Caco-2 (cell line): ENCODE measurements at regions of chr11 and their contacts with region 1.

Region 1: GRCh38 chr11:4636962-4637661 is at the start of gene OR51D1:
- DNase-seq: peak; percentile 63 to 78
- H3K4me3 ChIP-seq: no peak within 1 kb of the TSS
- H3K4me3 Mint-ChIP-seq: no peak within 1 kb of the TSS
- H3K27ac Mint-ChIP-seq: no peak within 1 kb of the TSS
- H3K4me1 ChIP-seq: peaks cover 11% of the 10 kb centered on the region
- H3K4me1 Mint-ChIP-seq: peaks cover 13% of the 10 kb centered on the region
- H3K27me3 ChIP-seq: peaks cover 1% of the 10 kb centered on the region; the same call in 1 of the 2 replicates
- H3K27me3 Mint-ChIP-seq: no peaks in the 10 kb centered on the region
- CTCF ChIP-seq: peak; percentile 89 to 94
- total RNA-seq, gene OR51D1: not detected in 2 replicates

Region 2: DNA sequence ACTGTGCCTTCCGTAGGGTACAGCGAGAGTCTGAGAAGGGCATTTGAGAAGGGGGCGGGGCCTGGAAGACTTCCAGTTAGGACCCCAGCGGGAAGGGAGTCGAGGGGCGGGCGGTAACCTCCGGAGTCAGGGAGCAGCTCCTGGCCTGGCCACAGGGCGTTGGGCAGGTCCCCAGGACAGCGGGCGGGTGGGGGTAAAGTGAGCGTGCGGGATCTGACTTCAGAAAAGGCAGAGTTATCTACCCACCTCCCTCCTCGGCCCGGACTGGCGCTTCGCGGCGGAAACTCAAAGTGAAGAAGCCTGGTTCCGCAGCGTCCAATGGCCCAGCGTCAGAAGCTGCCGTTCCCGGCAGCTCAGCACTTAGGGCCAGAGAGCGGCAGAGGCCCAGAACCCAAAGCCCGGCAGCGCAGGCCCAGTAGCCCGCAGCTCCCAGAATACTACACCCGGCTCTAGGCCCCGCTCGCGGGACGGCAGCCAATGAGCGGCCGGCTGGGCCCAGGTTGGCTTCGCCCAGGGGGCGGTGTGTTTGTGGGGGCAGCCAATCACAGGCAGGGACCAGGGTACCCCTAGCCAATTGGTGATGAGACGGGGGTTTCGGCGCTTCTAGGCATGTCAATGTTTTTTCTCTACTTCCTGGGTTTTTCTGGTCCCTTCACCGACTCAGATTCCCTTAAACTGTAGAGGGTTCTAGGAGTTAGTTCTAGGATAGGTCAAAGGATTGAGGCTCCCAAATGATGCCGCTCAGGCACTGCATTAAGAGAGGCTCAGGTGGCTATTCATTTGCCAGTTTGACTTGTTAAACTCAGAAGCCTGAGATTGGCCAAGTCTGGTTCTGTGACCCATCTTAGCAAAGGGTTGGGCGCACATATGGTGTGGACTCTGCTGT is 29.1 kb before region 1 on chr11 and contains the start of gene TRIM68:
- CTCF ChIA-PET with region 1: interaction called, 12 read pairs
- POLR2A ChIA-PET with region 1: no interaction called
- intact Hi-C with region 1: no loop called
- DNase-seq: peak; percentile 97 to 98
- H3K4me3 ChIP-seq: peak within 1 kb of the TSS; percentile 50
- H3K4me3 Mint-ChIP-seq: peak within 1 kb of the TSS; percentile 87
- H3K27ac Mint-ChIP-seq: peak within 1 kb of the TSS; percentile 88
- H3K4me1 ChIP-seq: 0 out of 2 replicates have a peak, but pooled peaks cover 13% of the 10 kb centered on the region
- H3K4me1 Mint-ChIP-seq: peaks cover 10% of the 10 kb centered on the region
- H3K27me3 ChIP-seq: no peaks in the 10 kb centered on the region
- H3K27me3 Mint-ChIP-seq: no peaks in the 10 kb centered on the region
- CTCF ChIP-seq: no peak
- total RNA-seq, gene TRIM68: 4.9 and 6.9 TPM in 2 replicates

Region 3: DNA sequence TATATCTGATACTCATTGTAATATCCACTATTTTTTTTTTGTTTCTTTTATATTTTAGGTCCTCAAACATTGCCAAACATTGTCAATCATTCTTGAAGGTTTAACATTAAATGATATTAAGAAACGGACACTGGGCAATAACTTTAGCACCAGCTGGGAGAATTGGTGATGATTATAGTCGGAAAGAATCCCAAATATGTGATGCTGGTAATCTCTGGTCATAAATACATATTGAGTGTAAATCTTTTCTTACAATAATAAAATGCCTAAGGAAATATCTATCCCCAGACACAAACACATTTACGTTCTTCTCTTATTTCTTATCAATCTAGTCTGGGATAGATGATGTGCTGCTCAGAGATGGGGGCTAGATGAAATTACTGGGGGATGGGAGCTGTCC is 35.4 kb after region 1 on chr11:
- CTCF ChIA-PET with region 1: no interaction called
- POLR2A ChIA-PET with region 1: no interaction called
- intact Hi-C with region 1: loop called (anchors 2 kb)
- DNase-seq: no peak
- H3K4me3 ChIP-seq: no peak overlapping the region
- H3K4me3 Mint-ChIP-seq: no peak overlapping the region
- H3K27ac Mint-ChIP-seq: peak overlapping the region; percentile 34
- H3K4me1 ChIP-seq: peaks cover 10% of the 10 kb centered on the region
- H3K4me1 Mint-ChIP-seq: peaks cover 19% of the 10 kb centered on the region
- H3K27me3 ChIP-seq: no peaks in the 10 kb centered on the region
- H3K27me3 Mint-ChIP-seq: peaks cover under 1% of the 10 kb centered on the region
- CTCF ChIP-seq: no peak

Region 4: DNA sequence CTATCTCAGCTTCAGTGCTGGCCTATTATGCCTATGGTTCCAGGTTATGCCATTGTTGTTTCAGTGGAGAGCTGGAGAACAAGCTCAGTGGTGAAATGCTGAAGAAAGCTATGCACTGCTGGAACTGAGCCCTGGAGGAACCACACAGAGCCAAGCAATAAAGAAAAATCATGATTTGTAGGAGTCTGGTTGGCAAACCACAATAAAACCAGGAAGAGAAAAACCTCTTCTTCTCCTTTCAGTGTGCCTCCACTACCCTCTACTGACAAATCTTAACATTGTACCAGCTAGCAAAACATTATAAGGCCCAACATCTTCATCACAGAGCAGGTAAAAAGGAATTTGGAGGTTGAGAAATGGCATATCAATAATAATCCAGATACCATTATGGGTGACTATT is 189.3 kb after region 1 on chr11:
- CTCF ChIA-PET with region 1: interaction called, 19 read pairs
- POLR2A ChIA-PET with region 1: no interaction called
- intact Hi-C with region 1: loop called (anchors 1 kb)
- DNase-seq: peak in 1 of 2 experiments; percentile 4
- H3K4me3 ChIP-seq: no peak overlapping the region
- H3K4me3 Mint-ChIP-seq: no peak overlapping the region
- H3K27ac Mint-ChIP-seq: no peak overlapping the region
- H3K4me1 ChIP-seq: no peaks in the 10 kb centered on the region
- H3K4me1 Mint-ChIP-seq: no peaks in the 10 kb centered on the region
- H3K27me3 ChIP-seq: no peaks in the 10 kb centered on the region; the same call in 1 of the 2 replicates
- H3K27me3 Mint-ChIP-seq: peaks cover under 1% of the 10 kb centered on the region
- CTCF ChIP-seq: peak; percentile 15 to 24

Region 5: GRCh38 chr11:5004424-5005274 is 367.5 kb after region 1 on chr11:
- CTCF ChIA-PET with region 1: interaction called, 6 read pairs
- POLR2A ChIA-PET with region 1: no interaction called
- intact Hi-C with region 1: loop called (anchors 1 kb)
- DNase-seq: peak in 1 of 2 experiments; percentile 58
- H3K4me3 ChIP-seq: no peak overlapping the region
- H3K4me3 Mint-ChIP-seq: no peak overlapping the region
- H3K27ac Mint-ChIP-seq: no peak overlapping the region
- H3K4me1 ChIP-seq: no peaks in the 10 kb centered on the region
- H3K4me1 Mint-ChIP-seq: no peaks in the 10 kb centered on the region
- H3K27me3 ChIP-seq: no peaks in the 10 kb centered on the region
- H3K27me3 Mint-ChIP-seq: peaks cover 6% of the 10 kb centered on the region
- CTCF ChIP-seq: peak; percentile 72 to 78